ENCODE measurements at regions of chr5 and their contacts with region 1.

Region 1: DNA sequence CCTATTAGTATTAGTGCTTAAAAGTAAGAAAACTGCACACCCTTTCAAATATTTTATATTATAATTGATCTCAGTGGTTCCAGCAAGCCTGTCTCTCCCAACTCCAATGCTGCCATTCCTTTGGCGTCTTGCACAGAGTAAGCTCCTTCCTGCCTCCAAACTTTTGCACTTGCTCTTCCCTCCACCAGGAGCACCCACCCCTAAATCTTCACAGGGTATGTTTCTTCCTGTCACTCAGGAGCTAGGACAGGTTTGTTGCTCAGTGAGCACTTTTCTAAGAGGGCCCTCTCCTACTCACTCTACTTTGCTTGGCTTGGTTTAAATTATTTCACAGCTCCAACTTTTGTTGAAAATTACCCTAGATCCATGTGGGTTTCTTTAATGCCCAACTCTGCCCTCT is 189.1 kb upstream of the ADRA1B start:
- DNase-seq: no peak
- H3K4me3 ChIP-seq: no peak overlapping the region
- H3K27ac ChIP-seq: no peak overlapping the region
- H3K4me1 ChIP-seq: no peaks in the 10 kb centered on the region
- H3K27me3 ChIP-seq: no peaks in the 10 kb centered on the region
- CTCF ChIP-seq: peak in 1 of 3 experiments; percentile 29; a peak in 1 of 4 replicates
- EP300 ChIP-seq: no peak
- POLR2A ChIP-seq: no peak
- RAD21 ChIP-seq: peak; percentile 21 to 38; a peak in 3 of 4 replicates

Region 2: DNA sequence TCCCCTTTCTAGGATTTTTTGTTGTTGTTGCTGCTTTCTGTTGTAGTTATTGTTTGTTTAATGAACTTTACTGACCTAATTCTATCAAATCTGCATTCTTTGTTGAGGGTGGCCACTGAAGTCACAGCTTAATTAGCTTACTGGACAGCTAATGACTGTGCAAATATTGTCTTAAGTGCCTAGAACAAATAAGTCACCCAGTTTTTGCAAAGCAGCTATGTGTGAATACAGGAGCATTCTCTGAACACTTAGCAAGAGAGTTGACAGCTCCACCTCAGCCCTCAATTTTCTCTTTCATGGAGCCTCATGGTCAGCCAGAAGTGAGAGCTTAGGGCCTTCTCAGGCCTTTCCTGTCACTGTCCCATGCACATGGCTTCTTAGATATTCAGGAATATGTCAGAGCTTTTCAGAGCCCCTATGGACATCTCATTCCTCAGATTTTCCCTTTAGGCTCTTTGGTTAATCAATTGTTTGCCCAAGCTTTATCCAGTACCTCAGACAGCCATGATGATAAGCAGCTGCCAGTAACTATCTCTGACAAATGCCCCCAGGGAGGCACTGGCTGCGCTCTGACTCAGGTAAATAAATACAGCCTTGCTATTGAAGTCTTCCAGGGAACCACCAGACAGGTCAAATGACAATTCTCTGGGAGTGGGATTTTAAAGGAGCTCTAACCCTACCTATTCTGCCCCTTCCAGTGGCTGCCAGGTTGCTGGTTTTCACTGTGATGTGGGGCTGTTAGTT is 155.5 kb before region 1 on chr5:
- CTCF ChIA-PET with region 1: no interaction called
- POLR2A ChIA-PET with region 1: no interaction called
- DNase-seq: no peak
- H3K4me3 ChIP-seq: no peak overlapping the region
- H3K27ac ChIP-seq: no peak overlapping the region
- H3K4me1 ChIP-seq: no peaks in the 10 kb centered on the region
- H3K27me3 ChIP-seq: no peaks in the 10 kb centered on the region; a peak in 1 of 7 replicates
- CTCF ChIP-seq: no peak
- EP300 ChIP-seq: no peak
- POLR2A ChIP-seq: no peak
- RAD21 ChIP-seq: no peak

Region 3: GRCh38 chr5:159712672-159713071 is 14.5 kb before region 1 on chr5:
- CTCF ChIA-PET with region 1: interaction called, 14 read pairs
- POLR2A ChIA-PET with region 1: no interaction called
- DNase-seq: no peak
- H3K4me3 ChIP-seq: no peak overlapping the region
- H3K27ac ChIP-seq: no peak overlapping the region
- H3K4me1 ChIP-seq: no peaks in the 10 kb centered on the region
- H3K27me3 ChIP-seq: no peaks in the 10 kb centered on the region
- CTCF ChIP-seq: no peak
- EP300 ChIP-seq: no peak
- POLR2A ChIP-seq: no peak
- RAD21 ChIP-seq: no peak